ENCODE measurements at regions of chr5 and their contacts with region 1.

Region 1: GRCh38 chr5:57779383-57780223 is 297.0 kb upstream of the ACTBL2 start:
- DNase-seq: peak; percentile 90
- H3K4me3 ChIP-seq: peak overlapping the region in 1 of 3 experiments; percentile 3
- H3K27ac ChIP-seq: peak overlapping the region; percentile 71
- H3K4me1 ChIP-seq: peaks cover 37% of the 10 kb centered on the region
- H3K27me3 ChIP-seq: no peaks in the 10 kb centered on the region
- CTCF ChIP-seq: peak; percentile 30 to 53
- POLR2A ChIP-seq: no peak

Region 2: GRCh38 chr5:57422341-57422740 is 357.3 kb before region 1 on chr5:
- CTCF ChIA-PET with region 1: no interaction called
- POLR2A ChIA-PET with region 1: interaction called, 10 read pairs
- dilution Hi-C with region 1: no loop called
- intact Hi-C with region 1: no loop called
- DNase-seq: no peak
- H3K4me3 ChIP-seq: no peak overlapping the region
- H3K27ac ChIP-seq: no peak overlapping the region
- H3K4me1 ChIP-seq: no peaks in the 10 kb centered on the region
- H3K27me3 ChIP-seq: no peaks in the 10 kb centered on the region
- CTCF ChIP-seq: no peak
- POLR2A ChIP-seq: no peak

Region 3: DNA sequence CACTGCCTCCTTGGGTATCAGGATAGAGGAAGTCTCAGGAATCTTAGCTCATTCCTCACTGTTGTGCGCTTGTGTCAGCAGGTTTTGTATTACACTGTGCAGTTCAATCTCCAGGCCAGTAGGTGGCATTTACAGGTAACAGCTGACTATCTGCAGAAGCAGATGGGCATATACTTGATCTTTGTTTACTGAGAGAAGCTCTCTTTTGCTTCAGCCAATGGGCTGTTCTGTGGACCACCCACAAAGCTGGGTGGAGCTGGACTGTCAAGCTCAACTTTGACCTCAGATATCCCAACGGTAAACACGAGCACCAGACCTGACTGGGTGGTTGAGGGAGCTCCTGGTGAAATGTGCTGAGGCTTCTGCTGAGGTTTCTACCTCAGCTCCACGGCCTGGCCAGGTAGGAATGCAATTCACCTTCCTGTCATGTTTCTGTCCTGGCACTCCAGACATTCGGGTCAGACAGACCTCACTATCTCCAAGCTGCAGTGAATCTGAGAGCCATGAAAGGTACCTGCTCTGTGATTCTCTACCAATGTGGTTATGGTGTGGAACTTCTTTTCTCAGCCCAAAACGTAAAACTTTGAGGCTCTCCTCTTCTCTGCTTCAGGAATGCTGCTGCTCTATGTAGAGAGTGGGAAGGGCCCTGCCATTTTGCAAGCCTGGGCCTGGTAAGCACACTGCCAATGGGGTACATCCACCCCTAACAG is 129.1 kb before region 1 on chr5:
- CTCF ChIA-PET with region 1: interaction called, 154 read pairs
- POLR2A ChIA-PET with region 1: interaction called, 3 read pairs
- dilution Hi-C with region 1: no loop called
- intact Hi-C with region 1: loop called (anchors 1 kb)
- DNase-seq: peak; percentile 61
- H3K4me3 ChIP-seq: no peak overlapping the region
- H3K27ac ChIP-seq: no peak overlapping the region
- H3K4me1 ChIP-seq: peaks cover 5% of the 10 kb centered on the region
- H3K27me3 ChIP-seq: no peaks in the 10 kb centered on the region
- CTCF ChIP-seq: peak; percentile 62 to 83
- POLR2A ChIP-seq: no peak

Region 4: DNA sequence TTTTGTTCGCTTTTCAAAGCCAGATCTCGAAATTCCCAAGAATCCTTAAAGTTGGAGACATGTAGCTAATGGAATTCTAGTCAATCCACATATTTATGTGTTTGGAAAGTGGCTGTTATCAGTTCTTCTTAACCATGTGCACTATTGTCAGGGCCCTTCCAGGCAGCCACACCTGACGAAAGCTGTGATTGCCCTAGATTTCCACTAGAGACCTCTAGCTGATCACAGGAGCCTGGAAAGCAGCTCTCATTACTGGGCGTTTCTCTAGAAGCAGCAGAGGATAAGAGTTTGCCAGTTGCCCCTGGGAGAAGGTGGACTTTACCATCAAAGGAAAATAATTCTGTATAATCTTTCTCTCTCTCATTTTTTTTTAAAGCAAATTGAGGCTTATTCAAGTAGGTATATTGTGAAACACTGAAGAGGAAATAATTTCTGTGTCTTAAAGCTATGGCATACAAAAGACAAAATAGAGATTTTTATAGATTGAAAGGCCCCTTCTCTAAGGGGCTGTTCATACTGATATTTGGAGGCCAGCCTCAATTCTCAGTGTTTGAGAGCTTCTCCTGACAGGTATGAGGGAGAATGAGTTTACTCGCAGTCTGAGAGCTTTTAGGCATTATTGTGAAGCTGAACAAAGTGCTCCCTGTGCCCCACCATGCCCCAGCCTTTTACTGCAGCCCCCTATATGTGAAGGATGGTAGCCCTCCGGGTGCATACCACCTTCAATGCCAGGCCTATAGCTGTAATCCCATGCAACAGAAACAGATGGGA is 108.4 kb after region 1 on chr5:
- CTCF ChIA-PET with region 1: interaction called, 124 read pairs
- POLR2A ChIA-PET with region 1: no interaction called
- dilution Hi-C with region 1: no loop called
- intact Hi-C with region 1: loop called (anchors 1 kb)
- DNase-seq: peak; percentile 73
- H3K4me3 ChIP-seq: no peak overlapping the region
- H3K27ac ChIP-seq: no peak overlapping the region
- H3K4me1 ChIP-seq: no peaks in the 10 kb centered on the region
- H3K27me3 ChIP-seq: no peaks in the 10 kb centered on the region
- CTCF ChIP-seq: peak; percentile 53 to 66
- POLR2A ChIP-seq: no peak

Region 5: GRCh38 chr5:57976506-57976905 is 196.9 kb after region 1 on chr5:
- CTCF ChIA-PET with region 1: no interaction called
- POLR2A ChIA-PET with region 1: no interaction called
- dilution Hi-C with region 1: no loop called
- intact Hi-C with region 1: no loop called
- DNase-seq: no peak
- H3K4me3 ChIP-seq: no peak overlapping the region
- H3K27ac ChIP-seq: no peak overlapping the region
- H3K4me1 ChIP-seq: no peaks in the 10 kb centered on the region
- H3K27me3 ChIP-seq: no peaks in the 10 kb centered on the region
- CTCF ChIP-seq: no peak
- POLR2A ChIP-seq: no peak

Region 6: GRCh38 chr5:58246461-58246944 is 466.9 kb after region 1 on chr5:
- CTCF ChIA-PET with region 1: interaction called, 26 read pairs
- POLR2A ChIA-PET with region 1: interaction called, 4 read pairs
- dilution Hi-C with region 1: no loop called
- intact Hi-C with region 1: no loop called
- DNase-seq: peak; percentile 51
- H3K4me3 ChIP-seq: no peak overlapping the region
- H3K27ac ChIP-seq: peak overlapping the region; percentile 77
- H3K4me1 ChIP-seq: peaks cover 54% of the 10 kb centered on the region
- H3K27me3 ChIP-seq: no peaks in the 10 kb centered on the region
- CTCF ChIP-seq: no peak
- POLR2A ChIP-seq: no peak

Region 7: DNA sequence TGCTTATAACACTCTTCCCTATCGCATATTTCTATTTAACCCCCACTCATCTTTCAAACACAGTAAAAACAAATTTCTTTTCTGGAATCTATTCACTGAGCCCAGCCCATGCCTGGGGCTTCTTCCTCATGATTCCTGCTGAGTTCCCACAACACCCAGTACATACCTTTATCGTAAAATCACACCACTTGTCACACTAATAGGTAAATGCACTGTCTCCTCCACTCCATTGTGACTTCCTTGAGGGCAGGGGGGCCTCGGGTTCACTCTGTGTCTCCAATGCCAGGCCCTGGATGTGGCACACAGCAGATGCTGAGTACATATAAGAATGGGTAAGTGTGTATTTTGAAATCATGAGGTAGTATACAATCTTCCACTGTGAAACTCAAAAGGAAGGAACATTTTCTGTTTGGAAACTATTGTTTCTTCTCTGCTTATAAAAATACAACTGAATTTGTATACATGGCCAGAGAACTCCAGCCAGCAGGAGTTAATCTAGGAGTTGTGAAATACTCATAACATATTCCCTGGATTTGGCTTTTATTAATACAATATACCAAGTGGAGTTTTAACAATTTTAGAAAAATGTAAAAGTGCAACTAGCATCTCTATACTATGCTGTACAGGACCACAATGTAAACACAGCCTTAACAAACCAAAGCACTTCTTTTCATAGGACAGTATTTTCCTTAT is 673.1 kb after region 1 on chr5:
- CTCF ChIA-PET with region 1: interaction called, 42 read pairs
- POLR2A ChIA-PET with region 1: interaction called, 17 read pairs
- dilution Hi-C with region 1: loop called (anchors 25 kb)
- intact Hi-C with region 1: no loop called
- DNase-seq: peak; percentile 55
- H3K4me3 ChIP-seq: no peak overlapping the region
- H3K27ac ChIP-seq: no peak overlapping the region
- H3K4me1 ChIP-seq: peaks cover 32% of the 10 kb centered on the region
- H3K27me3 ChIP-seq: no peaks in the 10 kb centered on the region
- CTCF ChIP-seq: no peak
- POLR2A ChIP-seq: no peak